ENCODE measurements at regions of chr5 and their contacts with region 1.

Region 1: DNA sequence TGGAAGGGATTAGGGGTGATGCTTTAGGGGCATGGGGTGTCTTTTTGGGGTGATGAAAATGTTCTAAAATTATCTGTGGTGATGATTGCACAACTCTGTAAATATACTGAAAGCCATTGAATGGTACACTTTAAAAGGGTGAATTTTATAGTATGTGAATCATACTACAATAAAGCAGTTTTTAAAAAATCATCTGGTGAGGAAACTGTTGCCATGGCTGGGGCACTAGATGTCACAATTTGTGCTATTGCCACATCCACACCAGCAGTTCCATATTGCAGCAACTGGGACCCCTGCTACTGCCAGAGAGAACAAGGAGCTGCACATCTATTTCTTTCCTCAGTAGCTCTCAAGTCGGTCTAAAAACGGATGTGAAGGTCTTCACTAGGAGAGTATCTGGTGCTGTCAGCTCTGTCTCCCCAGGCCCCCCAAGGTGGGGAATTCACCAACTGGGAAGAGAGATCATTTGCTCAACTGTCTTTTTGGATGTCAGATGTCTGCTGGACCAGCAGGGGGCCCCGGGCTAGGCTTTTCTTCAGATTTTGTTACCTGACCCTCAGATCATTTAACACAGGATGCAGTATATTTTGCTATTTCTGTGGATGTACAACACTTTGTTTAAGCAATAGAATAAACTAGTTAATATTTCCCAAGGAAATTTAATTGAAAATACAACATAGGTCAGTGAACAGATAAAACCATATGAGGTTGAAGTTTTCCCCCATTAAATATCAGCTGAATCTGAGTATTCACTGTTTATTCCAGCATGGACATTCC is 13.2 kb downstream of the CMYA5 start:
- DNase-seq: no peak
- ATAC-seq: no peak

Region 2: GRCh38 chr5:79857714-79858409 is 155.1 kb after region 1 on chr5:
- intact Hi-C with region 1: loop called (anchors 5 kb)
- DNase-seq: no peak
- ATAC-seq: peak; percentile 55

Region 3: GRCh38 chr5:80109646-80110478 is 407.1 kb after region 1 on chr5:
- intact Hi-C with region 1: no loop called
- DNase-seq: no peak
- ATAC-seq: peak; percentile 93

Measured in Right ventricle myocardium inferior (tissue), 1 donor.